ENCODE measurements at regions of chr19 and their contacts with region 1.

Region 1: GRCh38 chr19:45439569-45440254 is 16.0 kb upstream of the ERCC1 start:
- DNase-seq: peak; percentile 76 to 94 (median 86)
- ATAC-seq: peak; percentile 70
- H3K4me3 ChIP-seq: peak overlapping the region; percentile 23 to 71
- H3K4me3 Mint-ChIP-seq: peak overlapping the region; percentile 74
- H3K27ac ChIP-seq: peak overlapping the region; percentile 65 to 81
- H3K27ac Mint-ChIP-seq: no peak overlapping the region
- H3K4me1 ChIP-seq: peaks cover 37% of the 10 kb centered on the region
- H3K4me1 Mint-ChIP-seq: peaks cover 30% of the 10 kb centered on the region
- H3K27me3 ChIP-seq: no peaks in the 10 kb centered on the region
- H3K27me3 Mint-ChIP-seq: no peaks in the 10 kb centered on the region
- CTCF ChIP-seq: peak; percentile 100

Region 2: DNA sequence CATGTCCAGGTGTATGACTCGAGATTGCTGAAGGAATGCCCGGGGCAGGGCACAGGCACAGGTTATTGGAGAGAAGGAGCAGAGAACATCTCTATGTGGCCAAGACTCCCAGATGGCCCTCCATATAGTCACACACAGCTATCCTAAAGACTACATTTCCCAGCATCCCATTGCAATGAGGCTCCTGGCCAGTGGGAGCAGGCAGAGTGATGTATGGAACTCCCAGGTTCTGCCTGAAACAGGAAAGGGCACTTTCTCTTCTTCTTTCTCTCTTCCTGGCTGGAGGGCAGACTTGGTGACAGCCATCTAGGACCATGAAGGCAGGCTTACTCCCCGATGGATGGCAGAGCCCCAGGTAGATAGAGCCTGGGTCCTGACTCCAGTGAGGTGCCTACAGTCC is 48.4 kb before region 1 on chr19:
- CTCF ChIA-PET with region 1: no interaction called
- POLR2A ChIA-PET with region 1: no interaction called
- intact Hi-C with region 1: no loop called
- DNase-seq: no peak
- ATAC-seq: no peak
- H3K4me3 ChIP-seq: no peak overlapping the region
- H3K4me3 Mint-ChIP-seq: no peak overlapping the region
- H3K27ac ChIP-seq: no peak overlapping the region
- H3K27ac Mint-ChIP-seq: no peak overlapping the region
- H3K4me1 ChIP-seq: no peaks in the 10 kb centered on the region
- H3K4me1 Mint-ChIP-seq: no peaks in the 10 kb centered on the region
- H3K27me3 ChIP-seq: peaks cover 0 to 3% of the 10 kb centered on the region in 2 experiments
- H3K27me3 Mint-ChIP-seq: peaks cover 20% of the 10 kb centered on the region
- CTCF ChIP-seq: no peak

Region 3: GRCh38 chr19:45423589-45424190 is 16.0 kb before region 1 on chr19 and contains the start of gene ERCC1:
- CTCF ChIA-PET with region 1: interaction called, 11 read pairs
- POLR2A ChIA-PET with region 1: interaction called, 4 read pairs
- intact Hi-C with region 1: no loop called
- DNase-seq: peak in 6 of 9 experiments; percentile 35 to 84 (median 48)
- ATAC-seq: peak; percentile 57
- H3K4me3 ChIP-seq: peak within 1 kb of the TSS; percentile 72 to 95
- H3K4me3 Mint-ChIP-seq: peak within 1 kb of the TSS; percentile 93
- H3K27ac ChIP-seq: peak within 1 kb of the TSS; percentile 48 to 88
- H3K27ac Mint-ChIP-seq: peak within 1 kb of the TSS; percentile 90
- H3K4me1 ChIP-seq: peaks cover 32% of the 10 kb centered on the region
- H3K4me1 Mint-ChIP-seq: peaks cover 55% of the 10 kb centered on the region
- H3K27me3 ChIP-seq: no peaks in the 10 kb centered on the region
- H3K27me3 Mint-ChIP-seq: peaks cover 2% of the 10 kb centered on the region
- CTCF ChIP-seq: no peak
- total RNA-seq, gene ERCC1: 28.7 to 31.5 TPM

Region 4: DNA sequence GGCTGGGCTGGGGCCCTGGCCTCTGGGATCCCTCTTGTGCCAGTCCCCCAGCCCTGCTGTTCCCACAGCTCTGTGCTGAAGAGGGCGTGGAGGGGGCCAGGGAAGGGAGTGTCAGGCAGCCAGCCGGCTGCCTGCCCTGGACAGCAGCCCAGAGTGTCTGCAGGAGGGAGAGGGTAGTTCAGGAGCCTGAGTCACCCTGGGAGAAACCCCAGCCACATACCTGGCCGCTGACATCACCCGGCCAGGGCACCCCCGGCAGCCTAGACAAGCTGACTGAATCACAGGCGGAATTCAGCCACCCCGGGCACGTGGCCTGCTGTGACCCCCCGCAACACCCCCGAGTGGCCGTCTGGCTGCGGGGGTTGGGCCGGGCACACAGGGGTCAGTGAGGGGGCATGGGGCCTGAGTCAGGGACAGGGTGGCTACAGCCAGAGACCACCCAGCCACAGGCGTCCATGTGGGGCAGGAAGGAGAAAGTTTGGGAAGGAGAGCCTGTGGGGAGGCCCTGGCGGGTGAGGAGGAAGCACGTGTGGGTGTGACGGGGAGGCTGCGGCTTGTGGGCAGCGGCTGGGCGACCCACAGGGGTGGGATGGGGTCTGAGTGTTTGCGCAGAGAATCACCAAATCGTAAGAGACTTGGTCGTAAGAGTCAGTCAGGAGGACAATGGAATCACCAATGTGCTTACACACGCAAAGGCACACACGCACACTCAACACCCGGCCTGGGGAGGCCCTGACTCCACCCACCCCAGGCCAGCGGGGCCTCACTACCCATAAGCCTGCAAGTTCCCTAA is 16.2 kb after region 1 on chr19:
- CTCF ChIA-PET with region 1: interaction called, 12 read pairs
- POLR2A ChIA-PET with region 1: interaction called, 4 read pairs
- intact Hi-C with region 1: no loop called
- DNase-seq: peak; percentile 17 to 90 (median 69)
- ATAC-seq: peak; percentile 50
- H3K4me3 ChIP-seq: peak overlapping the region in 1 of 2 experiments; percentile 2
- H3K4me3 Mint-ChIP-seq: peak overlapping the region; percentile 35
- H3K27ac ChIP-seq: peak overlapping the region in 1 of 2 experiments; percentile 3
- H3K27ac Mint-ChIP-seq: peak overlapping the region; percentile 82
- H3K4me1 ChIP-seq: peaks cover 26% of the 10 kb centered on the region
- H3K4me1 Mint-ChIP-seq: peaks cover 29% of the 10 kb centered on the region
- H3K27me3 ChIP-seq: no peaks in the 10 kb centered on the region
- H3K27me3 Mint-ChIP-seq: peaks cover 2% of the 10 kb centered on the region
- CTCF ChIP-seq: no peak